ENCODE measurements at regions of chr10 and their contacts with region 1.

Region 1: DNA sequence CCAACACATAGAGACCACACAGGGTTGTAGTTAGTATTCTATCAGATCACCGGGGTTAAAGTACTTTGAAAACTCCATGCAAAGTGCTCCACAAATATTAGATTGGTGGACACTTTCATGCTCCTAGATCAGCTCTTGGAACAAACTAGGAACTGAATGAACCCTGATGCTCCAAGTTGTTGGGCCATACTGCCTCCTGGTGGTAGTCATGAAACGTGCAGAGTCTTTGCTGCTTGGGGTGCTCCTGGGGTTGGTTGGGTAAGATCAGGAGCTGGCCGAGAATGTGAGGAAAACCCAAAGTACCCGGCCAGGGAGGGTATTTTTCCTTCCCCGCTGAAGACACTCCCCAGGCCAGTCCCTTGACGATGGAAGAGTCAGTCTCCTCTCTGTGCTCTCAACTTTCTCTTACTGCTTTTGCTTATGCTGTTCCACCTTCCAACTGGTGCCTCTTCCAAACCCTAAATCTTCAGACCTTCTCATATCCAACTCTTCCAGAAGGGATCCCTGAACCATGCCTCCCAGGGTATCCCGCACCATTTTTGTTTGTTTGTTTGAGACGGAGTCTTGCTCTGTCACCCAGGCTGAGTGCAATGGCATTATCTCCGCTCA is 920 bp upstream of the RPEL1 start:
- DNase-seq: no peak
- H3K4me3 ChIP-seq: no peak overlapping the region
- CTCF ChIP-seq: peak; percentile 87

Region 2: DNA sequence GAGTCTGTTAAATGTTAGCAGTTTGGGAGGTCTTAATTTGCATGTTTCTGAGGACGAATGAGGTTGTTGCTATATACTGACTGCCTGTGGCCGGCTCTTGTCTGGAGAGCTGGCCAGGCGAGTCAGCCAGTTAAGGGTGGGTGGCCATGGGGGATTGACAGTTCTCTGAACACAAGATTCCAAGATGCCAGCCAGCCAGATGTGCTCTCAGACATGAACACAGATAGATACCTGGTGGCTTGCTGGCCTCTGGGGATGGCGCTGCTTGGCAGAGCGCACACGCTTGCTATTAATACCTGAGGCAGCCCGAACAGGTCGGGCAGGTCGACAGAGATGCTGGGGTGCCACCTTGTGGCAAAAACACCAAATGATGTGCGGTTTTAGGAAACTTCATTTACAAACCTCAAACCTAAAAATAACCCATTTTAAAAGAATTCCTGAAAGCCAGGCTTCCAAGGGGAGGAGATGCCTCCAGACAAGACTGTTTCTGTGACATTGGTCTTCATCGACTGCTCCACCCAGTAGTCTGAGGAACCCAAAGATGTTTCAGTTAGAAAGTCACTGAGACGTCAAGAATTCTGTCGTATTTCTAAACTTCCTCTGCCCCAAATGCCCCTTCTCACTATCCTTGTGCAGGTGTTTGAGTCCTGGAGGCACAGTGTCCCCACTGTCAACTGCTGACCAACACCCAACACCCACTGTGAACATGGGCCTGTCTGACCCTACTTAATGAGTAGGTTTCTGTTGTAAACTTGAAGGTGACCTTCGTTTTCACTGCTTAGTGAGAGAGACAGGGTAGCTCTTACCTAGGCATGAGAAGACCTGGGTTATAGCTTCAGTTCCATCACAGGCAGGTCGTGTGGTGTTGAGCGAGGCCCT is 175.1 kb before region 1 on chr10:
- CTCF ChIA-PET with region 1: interaction called, 21 read pairs
- POLR2A ChIA-PET with region 1: no interaction called
- DNase-seq: no peak
- H3K4me3 ChIP-seq: no peak overlapping the region
- CTCF ChIP-seq: peak; percentile 54

Region 3: DNA sequence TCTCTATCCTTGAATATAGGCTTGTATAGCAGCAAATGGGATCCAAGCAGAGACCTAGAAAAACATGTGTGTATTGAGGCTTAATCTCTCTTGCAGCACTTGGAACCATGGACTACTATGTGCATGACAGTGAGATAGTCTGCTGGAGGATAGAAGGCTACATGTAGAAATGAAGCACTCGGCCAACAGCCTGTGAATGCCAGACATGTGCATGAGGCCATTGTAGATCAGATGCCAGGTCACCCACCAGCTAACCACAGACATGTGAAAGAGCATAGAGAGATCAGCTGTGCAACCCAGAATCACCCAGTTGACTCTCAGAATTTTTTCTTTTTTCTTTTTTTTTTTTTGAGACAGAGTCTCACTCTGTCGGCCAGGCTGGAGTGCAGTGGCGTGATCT is 142.6 kb before region 1 on chr10:
- CTCF ChIA-PET with region 1: interaction called, 62 read pairs
- POLR2A ChIA-PET with region 1: no interaction called
- DNase-seq: no peak
- H3K4me3 ChIP-seq: no peak overlapping the region
- CTCF ChIP-seq: no peak

Region 4: GRCh38 chr10:103145046-103145445 is 99.7 kb before region 1 on chr10:
- CTCF ChIA-PET with region 1: interaction called, 17 read pairs
- POLR2A ChIA-PET with region 1: no interaction called
- DNase-seq: no peak
- H3K4me3 ChIP-seq: peak overlapping the region; percentile 6; the same call in 1 of the 2 replicates
- CTCF ChIP-seq: no peak

Region 5: DNA sequence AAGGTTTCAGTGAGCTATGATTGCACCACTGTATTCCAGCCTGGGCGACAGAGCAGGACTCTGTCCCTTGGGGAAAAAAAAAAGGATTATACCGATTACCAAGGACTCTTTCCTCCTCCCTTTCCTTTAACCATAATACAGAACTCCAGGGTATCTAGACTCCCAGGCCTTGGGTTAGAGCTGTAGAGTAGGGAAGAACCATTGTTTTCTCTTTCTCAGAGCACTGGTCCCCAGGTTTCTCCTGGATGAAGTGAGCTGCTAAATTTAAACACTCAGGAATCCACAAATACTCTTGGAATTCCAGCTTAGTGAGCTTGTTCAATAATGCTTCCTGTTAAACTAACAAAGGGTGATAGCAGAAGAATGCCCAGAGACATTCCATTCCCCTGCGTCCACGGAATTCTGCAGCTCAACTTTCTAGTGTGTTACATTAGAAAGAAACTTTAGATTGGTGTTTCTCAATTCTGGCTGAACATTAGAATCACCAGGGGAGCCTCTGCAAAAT is 13.7 kb before region 1 on chr10:
- CTCF ChIA-PET with region 1: interaction called, 18 read pairs
- POLR2A ChIA-PET with region 1: no interaction called
- DNase-seq: peak; percentile 87
- H3K4me3 ChIP-seq: no peak overlapping the region
- CTCF ChIP-seq: no peak

Region 6: GRCh38 chr10:103442031-103442461 is 197.3 kb after region 1 on chr10:
- CTCF ChIA-PET with region 1: no interaction called
- POLR2A ChIA-PET with region 1: no interaction called
- DNase-seq: no peak
- H3K4me3 ChIP-seq: no peak overlapping the region
- CTCF ChIP-seq: no peak

Region 7: GRCh38 chr10:103491493-103492381 is 247.0 kb after region 1 on chr10:
- CTCF ChIA-PET with region 1: no interaction called
- POLR2A ChIA-PET with region 1: no interaction called
- DNase-seq: peak; percentile 92
- H3K4me3 ChIP-seq: no peak overlapping the region
- CTCF ChIP-seq: no peak

Measured in AG04449 (cell line).